SK-N-SH (cell line): ENCODE measurements at regions of chr9 and their contacts with region 1.

Region 1: GRCh38 chr9:90870621-90871326 is 69.2 kb downstream of the SYK start:
- DNase-seq: peak; percentile 50
- H3K4me3 ChIP-seq: peak overlapping the region in 1 of 2 experiments; percentile 35; a peak in 1 of 4 replicates
- H3K27ac ChIP-seq: no peak overlapping the region
- H3K4me1 ChIP-seq: no peaks in the 10 kb centered on the region; a peak in 1 of 4 replicates
- H3K27me3 ChIP-seq: no peaks in the 10 kb centered on the region
- CTCF ChIP-seq: peak; percentile 95
- EP300 ChIP-seq: no peak
- RAD21 ChIP-seq: peak; percentile 91

Region 2: GRCh38 chr9:90851444-90851843 is 19.3 kb before region 1 on chr9:
- CTCF ChIA-PET with region 1: interaction called, 12 read pairs
- POLR2A ChIA-PET with region 1: no interaction called
- DNase-seq: no peak
- H3K4me3 ChIP-seq: no peak overlapping the region
- H3K27ac ChIP-seq: no peak overlapping the region
- H3K4me1 ChIP-seq: peaks cover 0 to 8% of the 10 kb centered on the region in 2 experiments; a peak in 1 of 4 replicates
- H3K27me3 ChIP-seq: no peaks in the 10 kb centered on the region
- CTCF ChIP-seq: no peak
- EP300 ChIP-seq: no peak
- RAD21 ChIP-seq: no peak

Region 3: DNA sequence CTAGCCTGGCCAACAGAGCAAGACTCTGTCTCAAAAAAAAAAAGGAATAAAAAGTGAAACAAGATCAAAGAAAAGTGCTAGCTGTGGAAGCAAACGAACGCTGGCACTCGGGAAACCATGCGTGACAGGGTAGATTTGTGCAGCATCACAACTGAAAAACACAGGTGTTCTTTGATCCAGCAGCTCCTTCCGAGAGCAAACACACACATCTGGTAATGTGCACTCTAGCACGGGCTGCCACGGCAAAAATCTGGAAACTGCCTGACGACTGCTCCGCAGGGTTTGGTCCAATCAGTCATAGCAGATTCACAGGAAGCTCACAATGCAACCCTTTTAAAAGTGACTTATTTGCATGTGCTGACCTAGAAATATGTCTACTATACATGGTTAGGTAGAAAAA is 10.9 kb after region 1 on chr9:
- CTCF ChIA-PET with region 1: interaction called, 20 read pairs
- POLR2A ChIA-PET with region 1: no interaction called
- DNase-seq: no peak
- H3K4me3 ChIP-seq: no peak overlapping the region
- H3K27ac ChIP-seq: no peak overlapping the region
- H3K4me1 ChIP-seq: no peaks in the 10 kb centered on the region
- H3K27me3 ChIP-seq: no peaks in the 10 kb centered on the region; the same call in 1 of the 2 replicates
- CTCF ChIP-seq: no peak
- EP300 ChIP-seq: no peak
- RAD21 ChIP-seq: no peak

Region 4: GRCh38 chr9:90915693-90916092 is 44.9 kb after region 1 on chr9:
- CTCF ChIA-PET with region 1: no interaction called
- POLR2A ChIA-PET with region 1: no interaction called
- DNase-seq: peak; percentile 43
- H3K4me3 ChIP-seq: no peak overlapping the region
- H3K27ac ChIP-seq: no peak overlapping the region
- H3K4me1 ChIP-seq: no peaks in the 10 kb centered on the region; a peak in 1 of 4 replicates
- H3K27me3 ChIP-seq: no peaks in the 10 kb centered on the region
- CTCF ChIP-seq: peak; percentile 38
- EP300 ChIP-seq: no peak
- RAD21 ChIP-seq: no peak; the same call in 1 of the 2 replicates